Activated naive CD4-positive, alpha-beta T cell treated with anti-CD3 and anti-CD28 coated beads, Interleukin-2, amount 10 ng/mL, durations not matched to agents 7 days and 5 days (primary cell): ENCODE measurements at regions of chr7 and their contacts with region 1.

Region 1: GRCh38 chr7:123865517-123866117 is 20.6 kb downstream of the HYAL4 start:
- DNase-seq: peak; percentile 48
- H3K4me3 Mint-ChIP-seq: no peak overlapping the region
- H3K27ac Mint-ChIP-seq: no peak overlapping the region
- H3K4me1 Mint-ChIP-seq: no peaks in the 10 kb centered on the region
- H3K27me3 Mint-ChIP-seq: no peaks in the 10 kb centered on the region

Region 2: DNA sequence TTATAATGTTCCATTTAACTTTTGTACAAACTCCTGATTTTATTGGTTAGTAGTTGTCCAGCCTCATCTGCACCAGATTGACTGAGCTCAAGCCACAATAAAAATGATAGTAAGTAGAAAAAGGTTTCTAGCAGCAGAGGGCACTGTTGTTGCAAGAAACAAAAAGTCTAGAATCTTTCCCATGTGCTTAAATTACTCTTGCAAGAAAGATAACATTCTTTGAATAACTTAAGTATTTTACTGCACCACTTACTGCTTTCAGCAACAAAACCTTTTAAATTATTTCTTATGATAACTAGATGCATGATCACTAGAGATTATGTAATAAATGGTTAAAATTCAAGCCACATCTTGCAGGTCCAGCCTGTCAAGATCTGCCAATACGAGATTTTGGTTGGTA is 182.9 kb before region 1 on chr7:
- CTCF ChIA-PET with region 1: interaction called, 17 read pairs
- DNase-seq: no peak
- H3K4me3 Mint-ChIP-seq: no peak overlapping the region
- H3K27ac Mint-ChIP-seq: no peak overlapping the region
- H3K4me1 Mint-ChIP-seq: no peaks in the 10 kb centered on the region
- H3K27me3 Mint-ChIP-seq: no peaks in the 10 kb centered on the region

Region 3: DNA sequence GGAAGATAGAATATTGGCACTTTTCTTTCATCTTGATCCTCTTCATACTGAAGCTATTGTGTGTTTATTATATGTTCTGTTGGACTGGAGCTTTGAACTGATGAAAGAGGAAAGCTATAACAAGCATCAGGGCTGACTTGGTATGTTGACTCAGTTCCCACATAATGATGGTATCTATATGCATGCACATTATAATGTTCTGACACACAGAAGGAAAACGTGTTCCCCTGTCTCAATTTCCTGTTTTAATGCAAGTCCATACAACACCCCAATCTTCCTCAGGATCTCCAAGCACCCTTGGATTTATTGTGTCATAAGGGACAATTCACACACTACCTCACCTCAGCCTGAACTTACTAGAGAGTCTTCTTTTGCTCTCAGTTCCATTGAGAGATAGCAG is 108.5 kb before region 1 on chr7:
- CTCF ChIA-PET with region 1: no interaction called
- DNase-seq: no peak
- H3K4me3 Mint-ChIP-seq: no peak overlapping the region
- H3K27ac Mint-ChIP-seq: no peak overlapping the region
- H3K4me1 Mint-ChIP-seq: peaks cover 9% of the 10 kb centered on the region
- H3K27me3 Mint-ChIP-seq: peaks cover 4% of the 10 kb centered on the region

Region 4: GRCh38 chr7:123797673-123798527 is 67.7 kb before region 1 on chr7:
- CTCF ChIA-PET with region 1: interaction called, 39 read pairs
- DNase-seq: no peak
- H3K4me3 Mint-ChIP-seq: no peak overlapping the region
- H3K27ac Mint-ChIP-seq: no peak overlapping the region
- H3K4me1 Mint-ChIP-seq: no peaks in the 10 kb centered on the region
- H3K27me3 Mint-ChIP-seq: peaks cover 3% of the 10 kb centered on the region

Region 5: GRCh38 chr7:123929107-123929506 is 63.5 kb after region 1 on chr7:
- CTCF ChIA-PET with region 1: no interaction called
- DNase-seq: no peak
- H3K4me3 Mint-ChIP-seq: no peak overlapping the region
- H3K27ac Mint-ChIP-seq: no peak overlapping the region
- H3K4me1 Mint-ChIP-seq: no peaks in the 10 kb centered on the region
- H3K27me3 Mint-ChIP-seq: no peaks in the 10 kb centered on the region